Pancreas (tissue), 10 donors: ENCODE measurements at regions of chr3 and their contacts with region 1.

Region 1: DNA sequence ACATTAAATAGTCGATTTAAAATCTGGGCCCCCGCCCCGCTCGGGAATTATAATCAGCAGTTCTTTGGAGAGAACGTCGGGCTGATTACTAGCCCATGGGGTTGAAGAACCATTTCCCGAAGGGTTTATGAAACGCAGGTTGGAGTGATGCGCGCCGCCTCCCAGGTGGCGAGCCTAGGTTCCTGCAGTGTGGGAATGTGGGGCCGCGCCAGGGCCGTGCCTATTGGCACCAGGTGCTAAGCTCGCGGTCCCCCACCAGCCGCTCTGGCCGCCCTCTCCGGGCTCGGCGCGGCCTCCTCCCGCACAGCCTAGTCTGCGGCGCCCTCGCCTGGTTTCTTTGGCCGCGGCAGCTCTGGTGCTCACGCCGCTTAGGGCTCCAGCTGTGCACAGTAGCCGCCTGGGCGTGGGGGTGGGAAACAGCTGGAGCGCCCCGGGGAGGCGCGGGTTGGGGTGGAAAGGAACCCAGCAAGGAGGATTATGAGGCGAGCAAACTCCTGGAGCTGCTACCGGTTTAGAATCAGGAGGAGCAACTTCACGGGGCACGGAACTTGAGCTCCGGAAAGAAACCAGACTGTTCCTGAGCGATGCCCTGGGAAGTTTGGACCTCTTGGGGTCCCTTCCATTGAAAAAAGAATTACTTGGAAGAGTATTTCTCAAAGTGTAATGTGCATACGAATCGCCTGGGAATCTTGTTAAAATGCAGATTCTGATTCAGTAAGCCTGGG is 5.6 kb upstream of the MECOM start:
- DNase-seq: peak; percentile 92 to 96 (median 95)
- ATAC-seq: peak; percentile 82 to 86 (median 84)
- H3K4me3 ChIP-seq: peak overlapping the region in 3 of 4 donors; percentile 20 to 46 (median 35)
- H3K27ac ChIP-seq: peak overlapping the region; percentile 79 to 92 (median 83)
- H3K4me1 ChIP-seq: peaks cover 3 to 8% (median 5%) of the 10 kb centered on the region in 3 donors
- H3K27me3 ChIP-seq: peaks cover 0 to 7% (median 0%) of the 10 kb centered on the region in 4 donors
- CTCF ChIP-seq: peak; percentile 41 to 75 (median 65)

Region 2: DNA sequence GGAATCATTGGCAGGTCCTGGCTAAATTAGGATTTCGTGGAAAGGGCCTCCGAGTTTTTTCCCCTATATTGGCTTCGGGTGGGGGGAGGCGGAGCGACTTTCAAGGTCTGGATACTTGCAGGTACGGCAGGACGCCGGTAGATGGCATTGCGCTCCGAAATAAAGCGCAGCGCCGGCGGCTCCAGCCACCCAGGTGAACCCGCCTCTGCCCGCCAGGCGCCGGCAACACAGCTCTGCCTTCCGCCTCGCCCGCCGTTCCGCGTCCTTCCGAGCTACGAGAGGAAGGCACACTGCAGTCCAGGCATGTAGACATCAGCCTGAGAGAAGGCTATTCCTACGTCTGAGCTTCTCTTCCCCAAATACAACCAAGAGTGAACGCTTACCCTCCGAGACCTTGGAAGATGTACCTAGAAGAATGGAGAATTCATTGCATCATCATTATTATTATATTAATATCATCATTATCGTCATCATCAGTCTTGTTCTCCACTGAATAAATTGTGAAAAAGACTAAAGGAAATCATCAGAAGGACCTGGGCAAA is 519.7 kb before region 1 on chr3:
- intact Hi-C with region 1: loop called in 2 of 3 experiments (anchors 5 to 10 kb)
- DNase-seq: peak; percentile 84 to 93 (median 90)
- ATAC-seq: peak; percentile 77 to 90 (median 86)
- H3K4me3 ChIP-seq: peak overlapping the region in 2 of 4 donors; percentile 52 to 54
- H3K27ac ChIP-seq: peak overlapping the region in 3 of 4 donors; percentile 22 to 91 (median 91)
- H3K4me1 ChIP-seq: peaks cover 0 to 21% (median 15%) of the 10 kb centered on the region in 3 donors
- H3K27me3 ChIP-seq: no peaks in the 10 kb centered on the region
- CTCF ChIP-seq: peak; percentile 60 to 89 (median 80)

Region 3: GRCh38 chr3:169218314-169218983 is 450.7 kb before region 1 on chr3:
- intact Hi-C with region 1: loop called in 1 of 3 experiments (anchors 10 kb)
- DNase-seq: peak in 4 of 6 donors; percentile 19 to 53 (median 30)
- ATAC-seq: peak; percentile 74 to 96 (median 88)
- H3K4me3 ChIP-seq: no peak overlapping the region
- H3K27ac ChIP-seq: no peak overlapping the region
- H3K4me1 ChIP-seq: no peaks in the 10 kb centered on the region
- H3K27me3 ChIP-seq: no peaks in the 10 kb centered on the region
- CTCF ChIP-seq: peak in 3 of 4 donors; percentile 12 to 37 (median 19)

Region 4: DNA sequence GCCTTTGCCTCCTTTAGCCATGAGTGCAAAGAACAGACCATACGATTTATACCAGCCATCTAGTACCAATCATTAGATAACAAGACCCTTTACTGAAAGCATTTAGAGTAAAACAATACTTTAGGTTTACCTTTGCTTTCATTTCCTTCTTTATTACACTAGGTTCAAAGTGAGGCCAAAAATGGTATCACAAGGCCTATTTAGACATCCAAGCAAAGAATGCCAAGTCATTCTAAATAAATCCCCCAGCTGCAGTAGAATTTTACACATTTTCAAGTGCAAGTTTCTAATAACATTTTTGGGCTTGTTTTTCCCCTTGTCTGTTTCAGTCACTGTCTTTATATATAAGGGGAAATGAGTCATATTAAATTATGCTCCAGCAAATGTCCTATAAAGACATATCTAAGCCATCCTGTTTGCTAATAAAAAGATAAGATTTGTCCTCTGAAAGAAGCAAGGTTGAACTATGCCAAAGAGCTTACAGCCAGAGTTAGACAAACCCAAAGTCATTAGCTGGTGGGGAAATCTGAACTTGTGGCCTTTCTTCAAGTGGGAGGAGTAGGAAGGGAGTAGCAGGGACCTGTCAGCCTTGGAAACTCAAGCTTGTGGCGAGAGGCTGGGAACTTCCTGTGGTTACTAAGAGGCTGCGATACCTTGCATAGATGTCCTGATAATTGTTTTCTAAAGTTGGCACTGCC is 238.3 kb before region 1 on chr3:
- intact Hi-C with region 1: loop called in 1 of 3 experiments (anchors 5 kb)
- DNase-seq: peak in 3 of 6 donors; percentile 33 to 44 (median 41)
- ATAC-seq: peak; percentile 47 to 60 (median 54)
- H3K4me3 ChIP-seq: no peak overlapping the region
- H3K27ac ChIP-seq: peak overlapping the region in 3 of 4 donors; percentile 44 to 84 (median 72)
- H3K4me1 ChIP-seq: peaks cover 23 to 47% (median 33%) of the 10 kb centered on the region in 3 donors
- H3K27me3 ChIP-seq: no peaks in the 10 kb centered on the region
- CTCF ChIP-seq: no peak

Region 5: GRCh38 chr3:169489775-169490546 is 179.2 kb before region 1 on chr3:
- intact Hi-C with region 1: no loop called
- DNase-seq: no peak
- ATAC-seq: peak in 3 of 4 donors; percentile 60 to 79 (median 76)
- H3K4me3 ChIP-seq: peak overlapping the region in 2 of 4 donors; percentile 0 to 4
- H3K27ac ChIP-seq: peak overlapping the region in 2 of 4 donors; percentile 15 to 36
- H3K4me1 ChIP-seq: peaks cover 0 to 12% (median 0%) of the 10 kb centered on the region in 3 donors
- H3K27me3 ChIP-seq: no peaks in the 10 kb centered on the region
- CTCF ChIP-seq: no peak

Region 6: DNA sequence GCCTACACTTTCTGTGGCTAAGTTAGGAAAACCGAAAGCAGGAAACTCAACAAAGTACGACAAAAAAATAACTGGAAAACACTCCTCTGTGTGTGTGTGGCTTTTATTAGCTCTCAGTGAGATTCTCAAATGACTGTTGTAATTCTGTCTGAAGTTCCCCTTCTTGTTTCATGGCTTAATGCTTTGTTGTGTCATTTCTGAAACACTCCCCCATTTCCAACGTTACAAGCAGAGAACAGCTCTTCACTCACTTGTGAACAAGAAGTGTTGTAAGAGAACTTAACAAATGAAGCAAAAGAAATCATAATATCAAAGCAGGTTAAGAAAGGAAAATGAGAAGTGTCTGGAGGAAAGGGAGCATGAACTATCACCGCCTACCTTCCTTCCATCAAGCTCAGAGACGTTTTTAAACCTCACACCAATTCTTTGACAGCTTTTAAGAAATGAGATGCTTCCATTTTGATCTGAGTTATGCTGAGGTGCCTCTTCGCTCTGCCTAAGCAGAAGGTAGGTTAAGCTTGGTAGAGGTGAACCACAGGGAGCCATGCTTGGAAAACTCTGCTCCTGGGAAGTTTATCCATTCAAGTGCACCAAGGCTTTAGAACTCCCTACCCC is 285.1 kb after region 1 on chr3:
- intact Hi-C with region 1: no loop called
- DNase-seq: no peak
- ATAC-seq: peak in 1 of 4 donors; percentile 53
- H3K4me3 ChIP-seq: no peak overlapping the region
- H3K27ac ChIP-seq: peak overlapping the region in 1 of 4 donors; percentile 13
- H3K4me1 ChIP-seq: no peaks in the 10 kb centered on the region
- H3K27me3 ChIP-seq: no peaks in the 10 kb centered on the region
- CTCF ChIP-seq: no peak